Tibial artery (tissue), 4 donors: ENCODE measurements at regions of chr1 and their contacts with region 1.

Region 1: DNA sequence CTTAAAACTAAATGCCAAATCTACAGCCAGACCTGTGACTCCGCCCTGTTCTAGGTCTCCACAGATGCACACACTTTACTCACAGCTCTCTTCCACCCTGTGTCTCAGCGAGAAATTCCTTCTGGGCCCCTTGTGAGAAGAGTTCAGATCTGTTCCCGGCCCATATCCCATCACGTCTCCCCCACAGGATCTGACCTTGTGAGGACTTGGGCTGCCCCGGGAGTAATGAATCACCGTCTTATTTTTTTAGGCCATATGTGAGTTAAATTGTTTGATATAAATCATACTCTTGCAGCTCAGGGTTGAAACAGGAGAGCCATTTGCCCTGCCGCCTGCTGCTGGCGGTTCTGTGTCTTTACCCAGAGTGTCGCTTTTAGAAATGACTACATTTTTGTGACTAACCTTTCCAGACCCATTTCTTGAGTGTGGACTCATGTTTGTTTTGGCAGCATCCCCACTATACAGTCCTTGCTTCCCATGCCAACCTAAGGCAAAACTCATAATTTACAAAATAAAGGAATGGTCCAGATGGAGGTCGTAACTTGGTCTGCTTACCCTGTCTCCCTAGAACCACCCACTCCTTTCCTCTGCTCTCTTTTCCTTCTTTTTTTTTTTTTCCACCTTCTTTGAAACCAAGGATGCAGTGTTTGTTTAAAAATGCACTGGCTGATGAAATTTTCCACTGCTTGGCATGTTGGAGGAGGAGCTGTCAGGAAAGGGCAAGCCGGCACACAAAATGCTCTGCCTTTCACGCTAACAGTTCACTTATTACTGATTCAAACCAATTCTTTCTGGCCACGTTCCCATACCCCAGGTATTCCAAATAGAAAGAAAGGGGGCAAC is 98.0 kb upstream of the C1orf105 start:
- DNase-seq: peak; percentile 44 to 82
- H3K4me3 ChIP-seq: peak overlapping the region; percentile 36 to 38
- H3K27ac ChIP-seq: peak overlapping the region; percentile 71 to 80
- H3K4me1 ChIP-seq: peaks cover 0 to 38% (median 24%) of the 10 kb centered on the region in 4 donors
- H3K27me3 ChIP-seq: no peaks in the 10 kb centered on the region
- CTCF ChIP-seq: peak in 1 of 2 experiments; percentile 19

Region 2: GRCh38 chr1:172357753-172358385 is 35.4 kb after region 1 on chr1:
- intact Hi-C with region 1: loop called (anchors 5 kb)
- DNase-seq: no peak
- H3K4me3 ChIP-seq: peak overlapping the region; percentile 17 to 22
- H3K27ac ChIP-seq: peak overlapping the region; percentile 66 to 70
- H3K4me1 ChIP-seq: peaks cover 0 to 44% (median 8%) of the 10 kb centered on the region in 4 donors
- H3K27me3 ChIP-seq: no peaks in the 10 kb centered on the region
- CTCF ChIP-seq: no peak

Region 3: GRCh38 chr1:172443626-172444453 is 121.4 kb after region 1 on chr1 and contains the start of gene PIGC:
- intact Hi-C with region 1: loop called (anchors 10 kb)
- DNase-seq: peak; percentile 87 to 93
- H3K4me3 ChIP-seq: peak within 1 kb of the TSS; percentile 89 to 99
- H3K27ac ChIP-seq: peak within 1 kb of the TSS; percentile 84 to 91
- H3K4me1 ChIP-seq: peaks cover 0 to 23% (median 9%) of the 10 kb centered on the region in 4 donors
- H3K27me3 ChIP-seq: no peaks in the 10 kb centered on the region
- CTCF ChIP-seq: peak; percentile 81 to 87